ENCODE measurements at regions of chr2 and their contacts with region 1.

Region 1: DNA sequence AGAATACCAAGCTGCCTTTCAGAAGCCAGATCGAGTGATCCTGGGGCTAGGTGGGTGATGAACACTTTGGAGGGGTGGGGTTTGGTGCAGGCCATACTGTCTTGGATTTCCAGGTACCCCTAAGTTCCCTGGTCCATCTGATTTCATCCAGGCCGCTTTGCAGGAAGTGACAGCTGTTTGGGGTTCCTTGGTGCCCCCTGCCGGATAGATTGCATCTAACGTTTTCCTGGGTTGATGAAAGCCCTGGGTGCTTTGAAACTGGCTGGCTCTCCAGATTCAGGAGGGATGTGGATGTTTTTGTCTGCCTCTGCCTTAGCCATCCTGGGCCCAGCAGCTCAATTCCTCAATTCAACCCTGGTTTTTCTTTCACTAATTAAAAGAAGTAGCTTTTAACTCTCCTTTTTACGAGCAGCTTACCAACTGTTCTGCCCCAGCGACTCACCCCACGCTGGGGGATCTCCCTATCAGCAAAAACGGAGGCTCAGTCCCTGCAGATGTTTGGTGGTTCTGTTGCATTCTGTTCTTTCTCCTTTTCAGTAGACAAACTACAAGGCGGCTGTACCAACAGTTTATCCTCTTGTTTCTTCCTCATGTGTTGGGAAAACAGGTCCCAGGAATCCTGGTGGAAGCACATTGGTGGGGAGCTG is 37.1 kb downstream of the ARHGEF4 start:
- DNase-seq: peak; percentile 61 to 75
- ATAC-seq: peak; percentile 88 to 93
- H3K4me3 ChIP-seq: no peak overlapping the region
- H3K27ac ChIP-seq: no peak overlapping the region
- H3K4me1 ChIP-seq: no peaks in the 10 kb centered on the region
- CTCF ChIP-seq: peak; percentile 74
- EP300 ChIP-seq: no peak
- POLR2A ChIP-seq: no peak
- RAD21 ChIP-seq: peak; percentile 76 to 77

Region 2: GRCh38 chr2:130791608-130791922 is 82.3 kb before region 1 on chr2:
- CTCF ChIA-PET with region 1: interaction called, 263 read pairs
- POLR2A ChIA-PET with region 1: no interaction called
- DNase-seq: no peak
- ATAC-seq: no peak
- H3K4me3 ChIP-seq: no peak overlapping the region
- H3K27ac ChIP-seq: no peak overlapping the region
- H3K4me1 ChIP-seq: no peaks in the 10 kb centered on the region
- CTCF ChIP-seq: no peak
- EP300 ChIP-seq: no peak
- POLR2A ChIP-seq: no peak
- RAD21 ChIP-seq: no peak

Region 3: GRCh38 chr2:130824492-130825061 is 49.2 kb before region 1 on chr2:
- CTCF ChIA-PET with region 1: interaction called, 14 read pairs
- POLR2A ChIA-PET with region 1: no interaction called
- DNase-seq: peak; percentile 78 to 83
- ATAC-seq: peak; percentile 38 to 65
- H3K4me3 ChIP-seq: no peak overlapping the region
- H3K27ac ChIP-seq: peak overlapping the region; percentile 37 to 76; a peak in 5 of 6 replicates
- H3K4me1 ChIP-seq: peaks cover 44% of the 10 kb centered on the region
- CTCF ChIP-seq: no peak
- EP300 ChIP-seq: no peak
- POLR2A ChIP-seq: no peak
- RAD21 ChIP-seq: no peak

Region 4: GRCh38 chr2:130845510-130846085 is 28.2 kb before region 1 on chr2:
- CTCF ChIA-PET with region 1: interaction called, 13 read pairs
- POLR2A ChIA-PET with region 1: no interaction called
- DNase-seq: no peak
- ATAC-seq: no peak
- H3K4me3 ChIP-seq: no peak overlapping the region
- H3K27ac ChIP-seq: no peak overlapping the region
- H3K4me1 ChIP-seq: no peaks in the 10 kb centered on the region
- CTCF ChIP-seq: no peak
- EP300 ChIP-seq: no peak
- POLR2A ChIP-seq: no peak
- RAD21 ChIP-seq: no peak

Region 5: GRCh38 chr2:130884503-130884902 is 10.7 kb after region 1 on chr2:
- CTCF ChIA-PET with region 1: interaction called, 21 read pairs
- POLR2A ChIA-PET with region 1: no interaction called
- DNase-seq: no peak
- ATAC-seq: peak in 1 of 2 experiments; percentile 27; a peak in 2 of 6 replicates
- H3K4me3 ChIP-seq: no peak overlapping the region
- H3K27ac ChIP-seq: no peak overlapping the region
- H3K4me1 ChIP-seq: no peaks in the 10 kb centered on the region
- CTCF ChIP-seq: no peak
- EP300 ChIP-seq: no peak
- POLR2A ChIP-seq: no peak
- RAD21 ChIP-seq: peak in 1 of 2 experiments; percentile 12; a peak in 1 of 5 replicates

Region 6: DNA sequence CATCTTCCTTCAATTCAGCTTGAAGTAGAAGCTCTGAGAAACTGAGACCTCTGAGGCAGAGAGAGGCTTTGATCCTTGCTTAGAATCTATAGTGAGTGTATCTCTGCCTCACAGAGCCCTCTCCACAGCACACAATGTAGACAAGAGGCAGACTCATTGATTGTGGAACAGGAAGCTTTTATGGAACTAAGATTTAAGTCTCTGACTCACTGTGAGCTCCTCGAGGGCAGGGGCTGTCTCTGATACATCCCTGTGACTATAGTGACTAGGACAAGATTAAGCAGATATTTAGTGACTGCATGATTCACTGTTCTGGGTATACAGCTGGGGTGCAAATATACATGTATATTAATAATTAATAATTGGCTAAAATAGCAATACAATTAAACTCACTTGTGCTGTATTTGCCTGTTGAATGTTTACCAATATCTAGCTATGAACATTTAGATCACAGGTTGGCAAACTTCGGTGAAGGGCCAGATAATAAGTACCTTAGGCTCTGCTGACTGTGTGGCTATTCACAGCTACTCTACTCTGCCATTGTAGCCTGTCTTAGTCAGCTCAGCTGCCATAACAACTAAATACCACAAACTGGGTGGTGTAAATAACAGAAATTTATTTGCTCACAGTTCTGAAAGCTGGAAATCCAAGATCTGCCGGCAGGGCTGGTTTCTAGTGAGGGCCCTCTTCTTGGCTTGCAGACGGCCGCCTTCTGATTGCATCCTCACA is 17.3 kb after region 1 on chr2:
- CTCF ChIA-PET with region 1: interaction called, 21 read pairs
- POLR2A ChIA-PET with region 1: no interaction called
- DNase-seq: no peak
- ATAC-seq: peak; percentile 31 to 47; a peak in 1 of 6 replicates
- H3K4me3 ChIP-seq: no peak overlapping the region
- H3K27ac ChIP-seq: no peak overlapping the region
- H3K4me1 ChIP-seq: no peaks in the 10 kb centered on the region
- CTCF ChIP-seq: no peak
- EP300 ChIP-seq: no peak
- POLR2A ChIP-seq: no peak
- RAD21 ChIP-seq: no peak

Region 7: GRCh38 chr2:130920415-130921163 is 46.8 kb after region 1 on chr2:
- CTCF ChIA-PET with region 1: interaction called, 20 read pairs
- POLR2A ChIA-PET with region 1: no interaction called
- DNase-seq: peak; percentile 71 to 75
- ATAC-seq: peak; percentile 76 to 91
- H3K4me3 ChIP-seq: no peak overlapping the region
- H3K27ac ChIP-seq: no peak overlapping the region
- H3K4me1 ChIP-seq: no peaks in the 10 kb centered on the region
- CTCF ChIP-seq: peak; percentile 86
- EP300 ChIP-seq: no peak
- POLR2A ChIP-seq: no peak
- RAD21 ChIP-seq: peak; percentile 67 to 70